Sciatic nerve (tissue), 2 donors: ENCODE measurements at regions of chr15 and their contacts with region 1.

Region 1: GRCh38 chr15:51649659-51650521 is 27.3 kb upstream of the DMXL2 start:
- DNase-seq: no peak
- ATAC-seq: peak; percentile 73

Region 2: GRCh38 chr15:51721199-51721960 is 71.5 kb after region 1 on chr15:
- intact Hi-C with region 1: no loop called
- DNase-seq: no peak
- ATAC-seq: no peak

Region 3: DNA sequence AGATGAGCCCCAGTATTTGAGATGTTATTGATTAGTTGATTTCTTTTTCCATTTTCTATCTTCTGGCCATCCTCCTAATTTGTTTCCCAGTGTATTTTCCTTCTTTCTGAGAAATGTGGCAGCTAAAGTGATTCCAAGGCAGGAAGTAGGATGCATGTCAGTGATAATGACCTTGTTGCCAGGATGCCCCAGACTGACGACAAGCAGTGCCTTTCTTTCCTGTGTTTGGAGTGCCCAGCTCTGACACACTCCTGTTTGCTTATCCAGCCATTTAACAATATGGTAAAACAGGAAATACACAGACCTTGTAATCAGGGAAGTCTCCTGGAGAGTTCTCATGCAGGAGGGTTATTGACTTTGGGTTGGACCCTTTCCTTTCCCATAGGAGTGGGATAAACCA is 121.9 kb after region 1 on chr15:
- intact Hi-C with region 1: loop called (anchors 5 kb)
- DNase-seq: no peak
- ATAC-seq: no peak